Common myeloid progenitor, CD34-positive (primary cell): ENCODE measurements at regions of chr5 and their contacts with region 1.

Region 1: DNA sequence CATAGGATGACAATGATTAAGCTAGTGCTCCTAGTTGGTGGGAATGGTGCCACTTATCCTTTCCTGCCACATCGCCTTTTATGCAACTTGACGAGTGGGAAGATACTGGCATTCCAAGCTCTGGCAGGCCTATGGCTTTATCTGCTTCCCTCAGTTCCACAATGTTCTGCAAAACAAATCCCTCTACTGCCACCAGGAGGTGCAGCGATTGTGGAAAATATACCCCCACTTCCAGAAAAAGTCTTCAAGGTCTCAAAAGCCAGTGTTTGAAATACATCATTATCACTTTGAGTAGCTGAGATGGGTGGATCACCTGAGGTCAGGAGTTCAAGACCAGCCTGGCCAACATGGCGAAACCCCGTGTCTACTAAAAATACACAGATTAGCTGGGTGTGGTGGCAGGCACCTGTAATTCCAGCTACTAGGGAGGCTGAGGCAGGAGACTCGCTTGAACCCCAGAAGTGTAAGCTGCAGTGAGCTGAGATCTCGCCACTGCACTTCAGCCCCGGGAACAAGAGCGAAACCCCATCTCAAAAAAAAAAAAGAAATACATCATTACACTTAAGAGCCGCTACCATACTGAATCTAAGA is 3.4 kb downstream of the CLINT1 start:
- DNase-seq: peak; percentile 69 to 79 (median 78)
- H3K4me3 ChIP-seq: peak overlapping the region in 3 of 7 experiments; percentile 26 to 97 (median 94)
- H3K27ac ChIP-seq: no peak overlapping the region
- H3K4me1 ChIP-seq: peaks cover 24 to 43% (median 33%) of the 10 kb centered on the region in 4 experiments
- H3K27me3 ChIP-seq: no peaks in the 10 kb centered on the region

Region 2: GRCh38 chr5:157697453-157697852 is 158.0 kb before region 1 on chr5:
- CTCF ChIA-PET with region 1: no interaction called
- POLR2A ChIA-PET with region 1: no interaction called
- DNase-seq: no peak
- H3K4me3 ChIP-seq: no peak overlapping the region
- H3K27ac ChIP-seq: no peak overlapping the region
- H3K4me1 ChIP-seq: no peaks in the 10 kb centered on the region
- H3K27me3 ChIP-seq: no peaks in the 10 kb centered on the region

Region 3: GRCh38 chr5:157778121-157778805 is 77.2 kb before region 1 on chr5:
- CTCF ChIA-PET with region 1: no interaction called
- POLR2A ChIA-PET with region 1: no interaction called
- DNase-seq: no peak
- H3K4me3 ChIP-seq: no peak overlapping the region
- H3K27ac ChIP-seq: no peak overlapping the region
- H3K4me1 ChIP-seq: no peaks in the 10 kb centered on the region
- H3K27me3 ChIP-seq: no peaks in the 10 kb centered on the region

Region 4: DNA sequence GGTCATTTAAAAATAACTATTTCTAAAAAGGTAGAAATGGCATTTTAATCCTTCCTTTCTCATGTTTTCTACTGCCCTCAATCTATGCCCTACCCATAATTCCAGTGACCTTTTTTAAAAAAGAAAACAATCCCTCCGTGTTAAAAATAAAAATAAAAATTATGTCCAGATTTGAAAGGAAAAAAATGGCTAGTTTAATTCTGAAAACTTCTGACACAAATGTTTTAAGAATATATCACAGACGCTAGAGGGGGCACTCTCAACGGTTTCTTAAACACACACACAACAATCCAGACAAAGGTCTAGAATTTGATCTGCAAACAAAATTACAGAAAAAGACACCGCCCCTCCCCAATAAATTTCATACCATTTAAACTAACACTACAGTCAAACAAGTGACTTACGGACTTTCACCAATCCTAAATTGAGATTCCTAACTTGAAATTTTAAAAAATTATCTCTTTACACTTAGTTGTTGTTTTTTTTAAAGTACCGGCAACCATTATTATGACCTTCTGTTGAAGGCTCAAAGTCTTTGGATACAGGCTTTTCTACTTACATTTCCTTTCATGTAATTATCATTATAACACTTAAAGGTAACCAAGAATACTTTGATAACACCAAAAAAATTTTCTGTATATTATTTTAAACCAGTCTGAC is 34.8 kb before region 1 on chr5:
- CTCF ChIA-PET with region 1: interaction called, 18 read pairs
- POLR2A ChIA-PET with region 1: no interaction called
- DNase-seq: peak; percentile 72 to 87 (median 87)
- H3K4me3 ChIP-seq: no peak overlapping the region
- H3K27ac ChIP-seq: no peak overlapping the region
- H3K4me1 ChIP-seq: peaks cover 0 to 25% (median 3%) of the 10 kb centered on the region in 4 experiments
- H3K27me3 ChIP-seq: no peaks in the 10 kb centered on the region

Region 5: GRCh38 chr5:157835041-157835440 is 20.5 kb before region 1 on chr5:
- CTCF ChIA-PET with region 1: interaction called, 69 read pairs
- POLR2A ChIA-PET with region 1: interaction called, 7 read pairs
- DNase-seq: peak in 1 of 3 donors; percentile 30
- H3K4me3 ChIP-seq: peak overlapping the region in 2 of 7 experiments; percentile 8 to 44
- H3K27ac ChIP-seq: peak overlapping the region; percentile 18 to 39
- H3K4me1 ChIP-seq: peaks cover 3 to 38% (median 27%) of the 10 kb centered on the region in 4 experiments
- H3K27me3 ChIP-seq: no peaks in the 10 kb centered on the region

Region 6: DNA sequence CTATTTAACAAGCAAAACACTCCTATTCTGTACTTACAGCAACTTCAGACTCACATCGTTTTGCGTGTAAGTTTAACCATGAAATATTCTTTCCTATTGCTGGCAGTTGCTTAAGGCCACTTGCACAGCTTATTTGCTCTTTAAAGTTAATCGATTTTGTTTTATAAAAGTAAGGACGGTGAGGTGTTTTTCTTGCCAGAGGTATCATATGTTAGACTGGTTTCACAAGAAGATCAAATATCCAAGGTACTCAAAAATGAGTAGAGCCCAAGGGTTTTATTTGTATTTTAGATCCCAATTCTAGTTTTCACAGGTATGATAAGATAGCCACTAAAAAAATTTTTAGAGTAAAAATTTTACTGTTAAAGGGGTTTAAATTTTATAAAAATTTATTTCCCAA is 12.7 kb before region 1 on chr5:
- CTCF ChIA-PET with region 1: interaction called, 12 read pairs
- POLR2A ChIA-PET with region 1: interaction called, 4 read pairs
- DNase-seq: no peak
- H3K4me3 ChIP-seq: no peak overlapping the region
- H3K27ac ChIP-seq: no peak overlapping the region
- H3K4me1 ChIP-seq: no peaks in the 10 kb centered on the region
- H3K27me3 ChIP-seq: no peaks in the 10 kb centered on the region

Region 7: DNA sequence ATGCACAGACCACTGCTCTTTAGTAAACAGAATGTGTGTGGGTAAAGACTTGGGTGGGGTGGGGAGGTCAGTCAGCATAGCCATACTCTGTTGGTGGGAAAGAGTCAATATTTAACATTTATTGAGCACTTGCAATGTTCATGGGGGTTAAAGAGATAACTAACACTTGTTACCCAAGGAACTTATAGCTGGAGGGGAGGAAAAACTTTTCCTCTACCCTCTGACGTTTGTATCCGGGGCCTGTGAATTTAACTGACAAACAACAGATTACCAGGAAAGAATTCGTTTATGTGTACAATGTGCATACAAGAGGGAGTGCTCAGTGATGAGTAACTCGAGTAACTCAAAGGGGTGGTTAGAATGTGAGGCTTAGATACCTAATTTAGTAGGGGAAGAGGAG is 10.3 kb after region 1 on chr5:
- CTCF ChIA-PET with region 1: interaction called, 40 read pairs
- POLR2A ChIA-PET with region 1: no interaction called
- DNase-seq: no peak
- H3K4me3 ChIP-seq: no peak overlapping the region
- H3K27ac ChIP-seq: no peak overlapping the region
- H3K4me1 ChIP-seq: peaks cover 3 to 36% (median 26%) of the 10 kb centered on the region in 4 experiments
- H3K27me3 ChIP-seq: no peaks in the 10 kb centered on the region

Region 8: GRCh38 chr5:157917899-157918809 is 62.7 kb after region 1 on chr5:
- CTCF ChIA-PET with region 1: interaction called, 67 read pairs
- POLR2A ChIA-PET with region 1: no interaction called
- DNase-seq: peak; percentile 73 to 80 (median 80)
- H3K4me3 ChIP-seq: peak overlapping the region in 1 of 7 experiments; percentile 70
- H3K27ac ChIP-seq: no peak overlapping the region
- H3K4me1 ChIP-seq: peaks cover 10 to 23% (median 16%) of the 10 kb centered on the region in 4 experiments
- H3K27me3 ChIP-seq: no peaks in the 10 kb centered on the region

Region 9: GRCh38 chr5:157948738-157949410 is 93.4 kb after region 1 on chr5:
- CTCF ChIA-PET with region 1: interaction called, 29 read pairs
- POLR2A ChIA-PET with region 1: interaction called, 3 read pairs
- DNase-seq: peak; percentile 89 to 95 (median 93)
- H3K4me3 ChIP-seq: peak overlapping the region in 1 of 7 experiments; percentile 23
- H3K27ac ChIP-seq: no peak overlapping the region
- H3K4me1 ChIP-seq: peaks cover 0 to 3% (median 0%) of the 10 kb centered on the region in 4 experiments
- H3K27me3 ChIP-seq: no peaks in the 10 kb centered on the region